ENCODE measurements at regions of chr2 and their contacts with region 1.

Region 1: DNA sequence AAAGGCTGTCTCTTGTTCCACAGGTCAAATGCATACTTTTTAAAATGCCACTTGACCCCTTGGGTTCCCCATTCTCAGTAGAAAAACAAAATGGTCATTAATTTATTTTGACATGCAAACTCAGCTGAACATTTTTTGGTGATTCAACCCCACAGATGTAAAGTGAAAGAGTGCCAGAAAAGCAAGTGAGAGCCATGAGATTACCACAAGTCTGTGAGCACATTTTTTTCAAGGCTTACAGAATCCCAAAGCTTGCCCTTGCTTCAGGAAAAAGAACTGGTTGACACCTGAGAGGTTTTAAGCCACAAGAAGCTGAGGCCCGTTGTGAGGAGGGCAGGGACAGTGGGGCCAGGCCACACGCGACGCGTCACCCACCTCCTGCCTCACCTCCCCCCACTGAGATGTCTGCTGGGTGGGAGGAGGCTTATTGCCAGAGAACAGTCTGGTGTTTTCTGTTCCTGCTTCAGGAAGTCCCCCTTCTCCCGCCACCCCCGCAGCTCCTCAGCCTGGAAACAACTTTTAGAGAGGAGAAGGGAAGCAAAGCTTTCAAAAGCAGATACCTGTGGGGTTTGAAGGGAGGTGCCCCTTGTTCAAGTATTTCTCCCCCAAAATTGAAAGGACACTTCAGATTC is 70.4 kb upstream of the CYP1B1 start:
- DNase-seq: peak; percentile 84
- H3K4me3 ChIP-seq: peak overlapping the region; percentile 42
- H3K27ac ChIP-seq: peak overlapping the region; percentile 99
- H3K27me3 ChIP-seq: no peaks in the 10 kb centered on the region
- CTCF ChIP-seq: no peak

Region 2: GRCh38 chr2:38174646-38175423 is 28.4 kb after region 1 on chr2:
- CTCF ChIA-PET with region 1: no interaction called
- POLR2A ChIA-PET with region 1: interaction called, 12 read pairs
- DNase-seq: peak; percentile 91
- H3K4me3 ChIP-seq: no peak overlapping the region
- H3K27ac ChIP-seq: peak overlapping the region; percentile 63
- H3K27me3 ChIP-seq: no peaks in the 10 kb centered on the region
- CTCF ChIP-seq: no peak

Measured in AG04450 (cell line).